Mammary epithelial cell (primary cell): ENCODE measurements at regions of chr20 and their contacts with region 1.

Region 1: GRCh38 chr20:57458400-57459160 is 66.4 kb downstream of the CTCFL start:
- DNase-seq: no peak
- H3K4me3 ChIP-seq: no peak overlapping the region
- H3K27ac ChIP-seq: no peak overlapping the region
- H3K4me1 ChIP-seq: no peaks in the 10 kb centered on the region
- H3K27me3 ChIP-seq: peaks cover 2% of the 10 kb centered on the region
- CTCF ChIP-seq: no peak

Region 2: DNA sequence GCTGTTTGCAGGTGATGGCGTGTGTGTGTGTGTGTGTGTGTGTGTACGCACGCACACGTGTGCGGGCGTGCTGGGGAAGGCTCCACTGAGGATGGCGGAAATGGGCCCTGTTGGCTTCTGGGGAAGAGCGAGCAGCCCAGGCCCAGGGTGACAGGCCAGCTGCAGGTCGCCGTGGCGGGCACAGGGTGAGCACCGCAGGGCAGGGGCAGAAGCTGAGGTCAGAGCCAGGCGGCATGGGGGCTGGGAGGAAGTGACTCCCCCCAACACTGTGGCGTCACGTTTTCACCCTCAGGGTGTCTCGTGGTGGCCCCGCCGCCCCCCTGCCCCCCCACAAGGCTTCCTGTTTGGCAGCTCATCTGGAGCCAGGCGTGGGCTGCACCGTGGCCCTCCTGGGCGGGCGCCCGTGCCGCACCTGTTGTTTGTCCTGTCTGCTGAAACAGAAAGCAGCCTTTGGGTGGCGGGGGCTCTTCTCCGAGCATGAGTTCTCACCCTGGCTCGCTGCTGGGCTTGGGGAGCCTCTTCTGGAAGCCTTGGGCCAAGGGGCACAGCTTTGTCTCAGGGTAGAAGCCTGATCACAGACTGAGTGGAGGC is 60.3 kb before region 1 on chr20:
- CTCF ChIA-PET with region 1: no interaction called
- dilution Hi-C with region 1: loop called (anchors 5 kb)
- in situ Hi-C with region 1: no loop called
- intact Hi-C with region 1: no loop called
- DNase-seq: no peak
- H3K4me3 ChIP-seq: no peak overlapping the region
- H3K27ac ChIP-seq: no peak overlapping the region
- H3K4me1 ChIP-seq: peaks cover 35% of the 10 kb centered on the region
- H3K27me3 ChIP-seq: no peaks in the 10 kb centered on the region
- CTCF ChIP-seq: no peak

Region 3: DNA sequence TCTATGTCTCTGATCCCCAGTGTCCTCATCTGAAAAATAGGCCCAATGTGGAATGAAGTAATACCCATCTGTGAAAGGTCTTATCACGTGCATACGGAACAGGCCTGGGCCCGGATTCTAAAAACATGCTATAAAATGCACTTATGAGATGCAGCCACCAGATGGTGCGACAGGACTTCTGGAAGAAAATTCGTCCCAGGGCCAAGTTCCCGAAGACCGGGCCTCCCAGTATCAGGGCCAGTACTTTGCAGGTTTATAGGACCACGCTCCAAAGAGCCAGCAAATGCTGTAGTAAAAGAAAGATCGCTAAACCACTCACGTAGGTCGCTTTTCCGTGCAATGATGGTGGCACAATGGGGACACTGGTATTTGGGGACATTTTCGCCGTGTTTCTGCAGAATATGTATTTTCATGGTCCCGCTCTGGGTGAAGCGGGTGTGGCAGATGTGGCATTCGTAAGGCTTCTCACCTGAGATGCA is 55.7 kb after region 1 on chr20:
- CTCF ChIA-PET with region 1: no interaction called
- dilution Hi-C with region 1: no loop called
- in situ Hi-C with region 1: no loop called
- intact Hi-C with region 1: no loop called
- DNase-seq: peak; percentile 57
- H3K4me3 ChIP-seq: no peak overlapping the region
- H3K27ac ChIP-seq: no peak overlapping the region
- H3K4me1 ChIP-seq: no peaks in the 10 kb centered on the region
- H3K27me3 ChIP-seq: no peaks in the 10 kb centered on the region
- CTCF ChIP-seq: peak; percentile 65 to 83